ENCODE measurements at regions of chr2 and their contacts with region 1.

Region 1: DNA sequence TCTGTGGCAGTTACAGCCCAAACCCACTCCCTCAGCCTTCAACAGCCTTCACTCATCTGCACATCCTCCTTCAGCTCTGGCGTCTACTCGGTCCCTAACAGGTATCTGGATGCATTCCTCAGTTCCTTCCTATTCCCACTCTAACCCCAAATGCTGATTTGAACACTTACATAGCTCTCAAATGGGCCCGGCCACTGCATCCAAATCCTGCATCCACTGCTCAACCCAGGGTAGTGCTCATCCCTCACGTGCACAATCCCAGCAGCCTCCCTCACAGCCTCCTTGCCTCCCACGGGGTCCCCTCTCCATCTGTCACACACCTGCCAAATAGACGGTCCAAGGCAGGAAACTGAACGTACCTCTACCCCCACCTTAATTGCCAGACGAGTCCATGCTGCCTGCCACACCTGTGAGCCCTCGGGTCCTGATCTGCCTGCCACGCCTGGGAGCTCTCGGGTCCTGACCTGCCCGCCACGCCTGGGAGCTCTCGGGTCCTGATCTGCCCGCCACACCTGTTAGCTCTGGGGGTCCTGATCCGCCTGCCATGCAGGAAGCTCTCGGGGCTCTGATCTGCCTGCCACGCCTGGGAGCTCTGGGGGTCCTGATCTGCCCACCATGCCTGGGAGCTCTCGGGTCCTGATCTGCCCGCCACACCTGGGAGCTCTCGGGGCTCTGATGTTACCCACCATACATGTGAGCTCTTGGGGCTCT is 9.9 kb downstream of the OR6B3 start:
- DNase-seq: no peak
- H3K4me3 ChIP-seq: no peak overlapping the region
- H3K4me3 Mint-ChIP-seq: no peak overlapping the region
- H3K27ac Mint-ChIP-seq: no peak overlapping the region
- H3K4me1 ChIP-seq: no peaks in the 10 kb centered on the region
- H3K4me1 Mint-ChIP-seq: no peaks in the 10 kb centered on the region
- H3K27me3 ChIP-seq: peaks cover 1% of the 10 kb centered on the region; the same call in 1 of the 2 replicates
- H3K27me3 Mint-ChIP-seq: peaks cover 29% of the 10 kb centered on the region
- CTCF ChIP-seq: no peak

Region 2: DNA sequence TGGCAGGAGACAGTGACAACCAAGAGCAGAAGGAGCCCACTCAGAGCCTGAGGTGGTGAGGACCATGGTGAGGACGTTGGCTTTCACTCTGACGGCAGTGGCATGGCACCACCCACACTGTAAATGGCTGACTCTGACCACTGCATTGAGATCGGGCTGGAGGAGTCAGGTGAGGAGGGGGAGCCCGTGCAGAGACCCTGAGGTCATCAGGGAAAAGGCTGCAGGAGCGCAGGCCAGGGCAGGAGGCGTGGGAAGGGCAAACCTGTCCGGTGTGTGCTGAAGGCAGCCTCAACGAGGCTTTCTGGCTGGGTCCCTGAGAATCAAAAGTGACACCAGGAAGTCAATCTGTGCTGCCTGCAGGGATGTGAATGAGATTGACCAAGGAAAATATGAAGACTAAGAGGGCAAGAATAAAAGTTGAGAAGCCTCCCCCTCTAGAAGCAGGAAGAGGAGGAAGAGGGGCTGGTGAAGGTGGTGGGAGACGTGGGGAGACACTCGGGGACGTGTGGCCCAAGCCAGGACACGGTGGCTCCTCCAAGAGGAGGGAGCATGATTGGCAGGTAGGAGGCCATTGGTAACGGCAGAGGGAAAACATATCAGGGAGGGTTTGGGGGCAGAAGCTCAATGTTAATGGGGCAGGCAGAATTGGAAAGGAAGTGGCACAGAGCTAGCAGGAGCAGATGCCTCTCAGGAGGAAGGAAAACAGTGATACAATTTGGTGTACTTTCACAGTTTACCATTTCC is 11.9 kb after region 1 on chr2:
- CTCF ChIA-PET with region 1: no interaction called
- POLR2A ChIA-PET with region 1: interaction called, 16 read pairs
- intact Hi-C with region 1: no loop called
- DNase-seq: no peak
- H3K4me3 ChIP-seq: no peak overlapping the region
- H3K4me3 Mint-ChIP-seq: no peak overlapping the region
- H3K27ac Mint-ChIP-seq: no peak overlapping the region
- H3K4me1 ChIP-seq: no peaks in the 10 kb centered on the region
- H3K4me1 Mint-ChIP-seq: no peaks in the 10 kb centered on the region
- H3K27me3 ChIP-seq: no peaks in the 10 kb centered on the region
- H3K27me3 Mint-ChIP-seq: peaks cover 27% of the 10 kb centered on the region
- CTCF ChIP-seq: no peak

Region 3: GRCh38 chr2:240205348-240205747 is 161.9 kb after region 1 on chr2:
- CTCF ChIA-PET with region 1: no interaction called
- POLR2A ChIA-PET with region 1: no interaction called
- intact Hi-C with region 1: no loop called
- DNase-seq: no peak
- H3K4me3 ChIP-seq: no peak overlapping the region
- H3K4me3 Mint-ChIP-seq: no peak overlapping the region
- H3K27ac Mint-ChIP-seq: no peak overlapping the region
- H3K4me1 ChIP-seq: no peaks in the 10 kb centered on the region
- H3K4me1 Mint-ChIP-seq: no peaks in the 10 kb centered on the region
- H3K27me3 ChIP-seq: no peaks in the 10 kb centered on the region
- H3K27me3 Mint-ChIP-seq: peaks cover 13% of the 10 kb centered on the region
- CTCF ChIP-seq: no peak

Measured in Caco-2 (cell line).